Mammary epithelial cell (primary cell): ENCODE measurements at regions of chr11 and their contacts with region 1.

Region 1: DNA sequence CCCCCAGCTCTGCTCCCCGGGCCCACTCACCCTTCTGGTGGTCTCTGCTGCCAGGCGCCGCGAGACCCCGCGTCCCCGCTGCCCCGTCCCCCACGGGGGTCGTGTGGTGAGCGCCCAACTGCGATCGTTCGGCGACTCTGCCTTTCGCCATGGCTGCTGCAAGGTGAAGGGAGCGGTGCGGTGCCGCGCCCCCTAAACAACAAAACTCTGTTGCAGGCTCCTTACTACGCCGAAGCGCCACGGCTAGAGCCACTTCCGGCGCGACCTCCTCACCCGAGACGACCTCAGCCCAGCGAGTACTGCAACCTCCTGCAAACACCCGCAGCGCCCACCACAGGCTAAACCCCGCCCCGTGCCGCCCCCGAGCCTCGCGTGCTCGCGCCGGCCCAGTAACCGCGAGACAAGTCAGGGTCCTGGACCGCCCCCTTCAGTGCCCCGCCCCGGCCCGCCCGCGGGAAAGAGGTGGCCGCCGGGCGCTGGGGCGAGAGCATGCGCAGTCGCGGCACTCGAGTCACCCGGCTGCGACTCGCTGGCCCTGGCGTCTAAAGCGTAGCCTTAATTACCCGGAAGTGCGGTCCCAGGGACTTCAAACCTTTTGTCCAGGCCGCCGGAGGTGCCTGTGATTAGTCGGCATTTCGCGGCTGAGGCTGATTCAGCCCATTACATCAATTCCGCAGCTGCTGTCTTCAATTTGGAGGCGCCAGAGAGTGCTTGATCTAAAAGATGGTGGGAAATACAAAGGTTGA is at the start of gene TMEM41B:
- DNase-seq: peak; percentile 98
- H3K4me3 ChIP-seq: peak within 1 kb of the TSS; percentile 73 to 82 (median 80)
- H3K27ac ChIP-seq: peak within 1 kb of the TSS; percentile 73
- H3K4me1 ChIP-seq: peaks cover 6% of the 10 kb centered on the region
- H3K27me3 ChIP-seq: no peaks in the 10 kb centered on the region
- CTCF ChIP-seq: peak in 1 of 2 donors; percentile 25
- total RNA-seq, gene TMEM41B: 58.2 to 59.7 TPM

Region 2: DNA sequence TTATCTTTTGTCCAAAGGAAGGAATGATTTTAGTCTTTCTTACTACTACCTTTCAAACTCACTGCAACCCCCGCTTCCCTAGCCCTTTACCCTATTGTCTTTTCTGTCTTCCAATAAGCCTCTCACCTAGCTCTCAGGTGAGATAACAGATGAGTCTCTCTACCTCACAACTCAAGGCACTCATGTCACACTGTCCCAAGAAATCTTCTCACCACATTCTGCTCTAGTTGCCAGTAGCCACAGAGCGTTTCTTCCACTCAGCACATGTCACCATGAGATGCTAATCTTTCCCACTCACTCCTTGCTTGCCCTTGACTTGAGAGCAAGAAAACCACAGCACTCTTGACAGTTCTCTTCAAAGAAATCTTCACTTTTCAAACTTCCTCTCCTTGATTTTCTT is 32.6 kb after region 1 on chr11:
- CTCF ChIA-PET with region 1: interaction called, 16 read pairs
- dilution Hi-C with region 1: no loop called
- in situ Hi-C with region 1: no loop called
- intact Hi-C with region 1: no loop called
- DNase-seq: no peak
- H3K4me3 ChIP-seq: no peak overlapping the region
- H3K27ac ChIP-seq: no peak overlapping the region
- H3K4me1 ChIP-seq: peaks cover under 1% of the 10 kb centered on the region
- H3K27me3 ChIP-seq: no peaks in the 10 kb centered on the region
- CTCF ChIP-seq: no peak

Region 3: DNA sequence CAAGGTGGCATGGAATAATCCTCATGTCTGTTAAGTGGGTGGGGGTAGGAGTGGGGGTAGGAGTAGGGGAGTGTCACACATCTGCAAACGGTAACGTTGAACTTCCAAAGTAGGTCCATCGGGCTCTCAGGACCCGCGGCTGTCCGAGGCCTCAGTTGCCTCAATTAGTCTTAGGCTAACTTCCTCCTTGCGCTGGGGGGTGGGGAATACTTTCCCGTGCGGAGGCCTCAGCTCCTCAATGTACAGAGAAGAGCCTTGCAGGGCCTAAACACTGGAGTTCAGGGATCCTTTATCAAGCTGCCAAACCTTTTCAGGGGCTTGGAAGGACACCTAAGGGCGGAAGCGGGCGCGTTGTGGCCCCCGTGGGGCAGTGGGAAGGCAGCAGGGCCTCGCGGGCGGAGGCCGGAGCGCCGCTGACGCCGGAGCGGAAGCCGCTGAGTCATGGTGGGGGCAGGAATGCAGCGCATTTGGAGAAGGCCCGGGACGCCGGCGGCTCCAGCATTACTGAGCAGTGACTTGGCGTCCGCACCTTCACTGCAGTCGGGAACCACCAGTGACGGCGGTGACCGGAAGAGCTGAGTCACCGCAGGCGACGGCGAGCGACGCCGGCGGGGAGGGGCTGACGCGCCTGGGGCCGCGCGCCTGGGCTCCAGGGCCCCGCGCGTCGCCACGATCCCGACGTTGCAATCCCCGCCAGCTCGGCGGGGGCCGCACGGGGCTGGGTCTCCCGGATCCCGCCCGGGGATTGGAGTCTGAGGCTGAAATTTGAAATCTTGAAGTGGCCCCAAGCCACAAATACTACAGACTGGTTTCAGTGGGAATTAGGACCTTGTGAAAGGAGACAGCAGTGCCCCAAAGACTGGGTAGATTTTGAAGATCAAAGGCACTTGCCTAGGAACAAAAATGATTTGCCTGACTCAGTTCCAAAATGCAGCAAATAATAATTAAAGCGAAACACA is 49.8 kb after region 1 on chr11:
- CTCF ChIA-PET with region 1: no interaction called
- dilution Hi-C with region 1: no loop called
- in situ Hi-C with region 1: no loop called
- intact Hi-C with region 1: loop called (anchors 1 kb)
- DNase-seq: peak; percentile 95
- H3K4me3 ChIP-seq: peak overlapping the region in 2 of 3 experiments; percentile 30 to 47
- H3K27ac ChIP-seq: peak overlapping the region; percentile 96
- H3K4me1 ChIP-seq: peaks cover 35% of the 10 kb centered on the region
- H3K27me3 ChIP-seq: no peaks in the 10 kb centered on the region
- CTCF ChIP-seq: no peak

Region 4: DNA sequence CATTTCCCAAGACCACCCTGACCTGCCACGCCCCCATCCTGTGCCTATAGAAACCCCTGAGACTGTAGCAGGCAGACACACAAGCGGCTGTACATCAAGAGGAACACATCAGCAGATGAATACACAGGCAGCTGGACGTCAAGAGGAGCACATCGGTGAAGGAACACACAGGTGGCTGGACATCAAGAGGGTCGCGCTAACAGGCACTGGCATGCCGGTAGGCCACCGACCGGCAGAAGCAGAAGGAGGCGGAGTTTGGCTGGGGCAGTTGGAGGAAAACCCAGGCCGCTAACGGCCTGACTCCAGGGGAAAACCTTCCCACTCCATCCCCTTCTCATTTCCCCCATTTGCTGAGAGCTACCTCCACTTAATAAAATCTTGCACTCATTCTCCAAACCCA is 64.6 kb after region 1 on chr11:
- CTCF ChIA-PET with region 1: no interaction called
- dilution Hi-C with region 1: loop called (anchors 5 kb)
- in situ Hi-C with region 1: loop called in 1 of 2 experiments (anchors 10 kb)
- intact Hi-C with region 1: no loop called
- DNase-seq: no peak
- H3K4me3 ChIP-seq: no peak overlapping the region
- H3K27ac ChIP-seq: no peak overlapping the region
- H3K4me1 ChIP-seq: peaks cover 3% of the 10 kb centered on the region
- H3K27me3 ChIP-seq: no peaks in the 10 kb centered on the region
- CTCF ChIP-seq: no peak

Region 5: DNA sequence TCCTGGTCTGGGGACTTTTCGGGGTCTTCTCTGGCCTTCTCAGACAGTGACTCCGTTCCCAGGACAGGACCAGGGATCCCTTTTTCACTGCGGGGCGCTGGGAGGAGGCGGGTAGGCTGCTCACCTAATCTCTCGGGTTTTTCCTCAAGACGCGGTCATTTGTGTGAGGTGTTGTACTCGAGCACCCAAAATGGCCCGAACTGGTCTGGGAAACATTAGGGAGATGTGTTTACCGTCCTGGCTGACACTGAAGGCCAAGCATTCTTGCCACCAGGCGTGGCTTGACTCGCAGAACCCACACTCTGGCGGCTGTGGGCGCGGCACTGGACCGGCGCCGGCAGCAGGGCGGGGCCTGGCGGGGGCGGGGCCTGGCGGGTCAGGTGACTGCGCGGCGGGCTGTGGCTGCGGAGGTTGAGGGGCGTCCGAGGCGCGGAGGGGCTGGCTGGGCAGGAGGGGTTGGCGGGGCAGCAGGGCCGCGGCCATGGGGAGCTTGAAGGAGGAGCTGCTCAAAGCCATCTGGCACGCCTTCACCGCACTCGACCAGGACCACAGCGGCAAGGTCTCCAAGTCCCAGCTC is 349.3 kb after region 1 on chr11 and contains the start of gene SWAP70:
- CTCF ChIA-PET with region 1: no interaction called
- dilution Hi-C with region 1: no loop called
- in situ Hi-C with region 1: no loop called
- intact Hi-C with region 1: no loop called
- DNase-seq: peak; percentile 81
- H3K4me3 ChIP-seq: peak within 1 kb of the TSS; percentile 72 to 95 (median 92)
- H3K27ac ChIP-seq: peak within 1 kb of the TSS; percentile 87
- H3K4me1 ChIP-seq: peaks cover 7% of the 10 kb centered on the region
- H3K27me3 ChIP-seq: no peaks in the 10 kb centered on the region
- CTCF ChIP-seq: peak in 1 of 2 donors; percentile 67
- total RNA-seq, gene SWAP70: 40.4 to 51.2 TPM